ENCODE measurements at regions of chr10 and their contacts with region 1.

Region 1: GRCh38 chr10:31864834-31865518 is 63.7 kb downstream of the ARHGAP12 start:
- DNase-seq: no peak
- H3K4me3 Mint-ChIP-seq: no peak overlapping the region
- H3K27ac Mint-ChIP-seq: no peak overlapping the region
- H3K4me1 Mint-ChIP-seq: peaks cover 2% of the 10 kb centered on the region
- H3K27me3 Mint-ChIP-seq: no peaks in the 10 kb centered on the region

Region 2: GRCh38 chr10:31928549-31929260 is 63.7 kb after region 1 on chr10 and contains the start of gene ARHGAP12:
- CTCF ChIA-PET with region 1: interaction called, 17 read pairs
- DNase-seq: peak; percentile 89
- H3K4me3 Mint-ChIP-seq: peak within 1 kb of the TSS; percentile 80
- H3K27ac Mint-ChIP-seq: peak within 1 kb of the TSS; percentile 83
- H3K4me1 Mint-ChIP-seq: peaks cover 52% of the 10 kb centered on the region
- H3K27me3 Mint-ChIP-seq: no peaks in the 10 kb centered on the region

Region 3: GRCh38 chr10:32005050-32005449 is 140.1 kb after region 1 on chr10:
- CTCF ChIA-PET with region 1: interaction called, 50 read pairs
- DNase-seq: peak; percentile 58
- H3K4me3 Mint-ChIP-seq: no peak overlapping the region
- H3K27ac Mint-ChIP-seq: no peak overlapping the region
- H3K4me1 Mint-ChIP-seq: peaks cover 10% of the 10 kb centered on the region
- H3K27me3 Mint-ChIP-seq: no peaks in the 10 kb centered on the region

Region 4: DNA sequence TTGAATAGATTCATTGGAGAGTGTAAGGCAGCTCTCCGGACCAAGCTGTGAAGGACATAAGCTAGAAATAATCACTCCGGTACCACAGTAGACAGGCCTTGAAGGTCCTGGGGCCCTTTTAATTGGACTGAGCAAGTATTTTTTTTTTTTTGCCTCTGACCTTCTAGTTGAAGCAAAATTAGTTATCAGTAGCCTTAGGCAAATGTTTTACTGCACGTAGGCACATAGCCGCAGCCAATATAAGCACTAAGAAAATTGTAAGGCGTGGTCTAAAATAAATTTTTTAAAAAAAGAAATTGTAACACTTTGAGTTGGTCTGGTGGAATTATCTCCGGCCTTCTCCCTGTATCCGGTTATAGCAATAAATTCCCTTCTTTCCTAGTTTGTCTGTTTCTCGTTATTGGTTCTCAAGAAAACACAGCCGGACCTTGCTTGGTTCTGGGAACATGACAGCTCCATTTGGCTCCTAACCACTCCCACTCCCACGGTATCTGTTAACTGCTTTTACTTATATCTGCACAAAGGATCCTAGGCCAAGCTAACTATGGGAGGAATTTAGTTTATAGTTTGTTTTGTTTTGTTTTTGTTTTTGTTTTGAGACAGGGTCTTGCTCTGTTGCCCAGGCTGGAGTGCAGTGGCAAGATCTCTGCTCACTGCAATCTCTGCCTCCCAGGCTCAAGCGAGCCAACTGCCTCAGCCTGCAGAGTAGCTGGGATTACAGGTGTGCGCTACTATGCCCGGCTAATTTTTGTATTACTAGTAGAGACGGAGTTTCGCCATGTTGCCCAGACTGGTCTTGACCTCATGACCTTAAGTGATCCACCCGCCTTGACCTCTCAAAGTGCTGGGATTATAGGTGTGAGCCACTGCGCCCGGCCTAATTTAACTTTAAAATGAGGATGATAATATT is 315.6 kb after region 1 on chr10:
- CTCF ChIA-PET with region 1: no interaction called
- DNase-seq: no peak
- H3K4me3 Mint-ChIP-seq: no peak overlapping the region
- H3K27ac Mint-ChIP-seq: no peak overlapping the region
- H3K4me1 Mint-ChIP-seq: no peaks in the 10 kb centered on the region
- H3K27me3 Mint-ChIP-seq: no peaks in the 10 kb centered on the region